ENCODE measurements at regions of chr5 and their contacts with region 1.

Region 1: GRCh38 chr5:149618581-149619251 is 37.4 kb downstream of the ARHGEF37 start:
- DNase-seq: peak; percentile 72
- ATAC-seq: peak; percentile 95
- H3K4me3 ChIP-seq: no peak overlapping the region
- H3K27ac ChIP-seq: no peak overlapping the region
- H3K4me1 ChIP-seq: peaks cover 3% of the 10 kb centered on the region
- H3K27me3 ChIP-seq: peaks cover 5% of the 10 kb centered on the region
- CTCF ChIP-seq: peak; percentile 79
- POLR2A ChIP-seq: no peak
- RAD21 ChIP-seq: peak; percentile 83

Region 2: GRCh38 chr5:149367249-149367971 is 251.3 kb before region 1 on chr5:
- CTCF ChIA-PET with region 1: no interaction called
- POLR2A ChIA-PET with region 1: no interaction called
- dilution Hi-C with region 1: no loop called
- in situ Hi-C with region 1: no loop called
- intact Hi-C with region 1: loop called (anchors 5 kb)
- DNase-seq: peak; percentile 70
- ATAC-seq: peak; percentile 85
- H3K4me3 ChIP-seq: no peak overlapping the region
- H3K27ac ChIP-seq: no peak overlapping the region
- H3K4me1 ChIP-seq: 0 out of 2 replicates have a peak, but pooled peaks cover 2% of the 10 kb centered on the region
- H3K27me3 ChIP-seq: no peaks in the 10 kb centered on the region
- CTCF ChIP-seq: peak; percentile 88
- POLR2A ChIP-seq: no peak
- RAD21 ChIP-seq: peak; percentile 83

Region 3: GRCh38 chr5:149381987-149382340 is 236.8 kb before region 1 on chr5:
- CTCF ChIA-PET with region 1: no interaction called
- POLR2A ChIA-PET with region 1: no interaction called
- dilution Hi-C with region 1: no loop called
- in situ Hi-C with region 1: no loop called
- intact Hi-C with region 1: loop called (anchors 2 kb)
- DNase-seq: peak; percentile 66
- ATAC-seq: peak; percentile 93
- H3K4me3 ChIP-seq: no peak overlapping the region
- H3K27ac ChIP-seq: peak overlapping the region; percentile 50; the same call in 1 of the 2 replicates
- H3K4me1 ChIP-seq: peaks cover 22% of the 10 kb centered on the region
- H3K27me3 ChIP-seq: no peaks in the 10 kb centered on the region
- CTCF ChIP-seq: peak; percentile 92
- POLR2A ChIP-seq: no peak
- RAD21 ChIP-seq: peak; percentile 90

Region 4: GRCh38 chr5:149434162-149435014 is 184.3 kb before region 1 on chr5:
- CTCF ChIA-PET with region 1: interaction called, 3 read pairs
- POLR2A ChIA-PET with region 1: no interaction called
- dilution Hi-C with region 1: no loop called
- in situ Hi-C with region 1: no loop called
- intact Hi-C with region 1: loop called (anchors 2 kb)
- DNase-seq: peak; percentile 82
- ATAC-seq: peak; percentile 55
- H3K4me3 ChIP-seq: no peak overlapping the region
- H3K27ac ChIP-seq: no peak overlapping the region
- H3K4me1 ChIP-seq: peaks cover 8% of the 10 kb centered on the region; the same call in 1 of the 2 replicates
- H3K27me3 ChIP-seq: no peaks in the 10 kb centered on the region
- CTCF ChIP-seq: peak; percentile 92
- POLR2A ChIP-seq: peak; percentile 55
- RAD21 ChIP-seq: peak; percentile 80

Region 5: GRCh38 chr5:149442563-149443182 is 176.0 kb before region 1 on chr5:
- CTCF ChIA-PET with region 1: interaction called, 7 read pairs
- POLR2A ChIA-PET with region 1: no interaction called
- dilution Hi-C with region 1: no loop called
- in situ Hi-C with region 1: no loop called
- intact Hi-C with region 1: loop called (anchors 2 kb)
- DNase-seq: peak; percentile 70
- ATAC-seq: peak; percentile 82
- H3K4me3 ChIP-seq: no peak overlapping the region
- H3K27ac ChIP-seq: peak overlapping the region; percentile 74
- H3K4me1 ChIP-seq: peaks cover 13% of the 10 kb centered on the region
- H3K27me3 ChIP-seq: no peaks in the 10 kb centered on the region
- CTCF ChIP-seq: peak; percentile 92
- POLR2A ChIP-seq: no peak
- RAD21 ChIP-seq: peak; percentile 96

Region 6: DNA sequence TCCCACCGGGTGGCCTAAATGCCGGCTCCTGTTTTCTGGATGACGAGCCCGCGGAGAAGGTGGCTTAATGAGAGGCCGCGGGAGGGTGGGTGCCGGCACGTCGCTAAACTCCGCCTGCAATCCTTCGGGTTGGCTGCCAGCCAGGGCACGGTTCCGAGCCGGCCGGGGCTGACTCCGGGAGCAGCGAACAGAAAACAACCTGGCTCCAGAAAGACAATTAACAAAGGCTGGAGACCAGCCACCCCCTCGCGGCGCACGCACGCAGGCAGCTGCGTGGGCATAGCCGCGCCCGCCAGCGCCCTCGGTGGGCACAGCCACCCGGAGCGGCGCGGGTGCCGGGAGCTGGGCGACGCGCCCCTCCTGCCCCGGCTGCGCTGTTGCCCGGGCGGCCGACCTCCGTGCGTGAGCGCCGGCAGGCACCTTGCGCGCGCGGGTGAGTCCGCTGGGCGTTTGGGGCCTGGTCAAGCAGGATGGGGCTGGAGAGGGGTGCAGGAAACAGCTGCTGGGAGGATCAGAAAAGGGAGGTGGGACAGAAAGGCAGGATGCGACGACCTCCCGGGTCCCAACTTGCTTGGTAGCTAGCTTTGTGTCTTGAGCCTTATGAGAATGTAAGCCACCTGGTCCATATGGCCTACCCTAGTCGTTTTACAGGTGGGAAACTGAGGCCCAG is 37.4 kb before region 1 on chr5 and contains the start of gene ARHGEF37:
- CTCF ChIA-PET with region 1: interaction called, 4 read pairs
- POLR2A ChIA-PET with region 1: no interaction called
- dilution Hi-C with region 1: no loop called
- in situ Hi-C with region 1: no loop called
- intact Hi-C with region 1: loop called (anchors 5 kb)
- DNase-seq: no peak
- ATAC-seq: peak; percentile 77
- H3K4me3 ChIP-seq: peak within 1 kb of the TSS; percentile 39
- H3K27ac ChIP-seq: no peak within 1 kb of the TSS
- H3K4me1 ChIP-seq: peaks cover 8% of the 10 kb centered on the region
- H3K27me3 ChIP-seq: no peaks in the 10 kb centered on the region
- CTCF ChIP-seq: no peak
- POLR2A ChIP-seq: no peak
- RAD21 ChIP-seq: no peak
- total RNA-seq, gene ARHGEF37: 0.28 and 0.54 TPM in 2 replicates

Region 7: GRCh38 chr5:149608526-149608880 is 10.2 kb before region 1 on chr5:
- CTCF ChIA-PET with region 1: interaction called, 10 read pairs
- POLR2A ChIA-PET with region 1: no interaction called
- dilution Hi-C with region 1: no loop called
- in situ Hi-C with region 1: no loop called
- intact Hi-C with region 1: no loop called
- DNase-seq: no peak
- ATAC-seq: no peak
- H3K4me3 ChIP-seq: no peak overlapping the region
- H3K27ac ChIP-seq: no peak overlapping the region
- H3K4me1 ChIP-seq: peaks cover 8% of the 10 kb centered on the region
- H3K27me3 ChIP-seq: no peaks in the 10 kb centered on the region
- CTCF ChIP-seq: no peak
- POLR2A ChIP-seq: no peak
- RAD21 ChIP-seq: no peak